ENCODE measurements at regions of chr7 and their contacts with region 1.

Region 1: GRCh38 chr7:16431646-16432424 is 10.5 kb upstream of the CRPPA start:
- DNase-seq: peak; percentile 62
- H3K4me3 Mint-ChIP-seq: no peak overlapping the region
- H3K27ac Mint-ChIP-seq: no peak overlapping the region
- H3K4me1 Mint-ChIP-seq: no peaks in the 10 kb centered on the region
- H3K27me3 Mint-ChIP-seq: no peaks in the 10 kb centered on the region
- CTCF ChIP-seq: peak; percentile 45

Region 2: DNA sequence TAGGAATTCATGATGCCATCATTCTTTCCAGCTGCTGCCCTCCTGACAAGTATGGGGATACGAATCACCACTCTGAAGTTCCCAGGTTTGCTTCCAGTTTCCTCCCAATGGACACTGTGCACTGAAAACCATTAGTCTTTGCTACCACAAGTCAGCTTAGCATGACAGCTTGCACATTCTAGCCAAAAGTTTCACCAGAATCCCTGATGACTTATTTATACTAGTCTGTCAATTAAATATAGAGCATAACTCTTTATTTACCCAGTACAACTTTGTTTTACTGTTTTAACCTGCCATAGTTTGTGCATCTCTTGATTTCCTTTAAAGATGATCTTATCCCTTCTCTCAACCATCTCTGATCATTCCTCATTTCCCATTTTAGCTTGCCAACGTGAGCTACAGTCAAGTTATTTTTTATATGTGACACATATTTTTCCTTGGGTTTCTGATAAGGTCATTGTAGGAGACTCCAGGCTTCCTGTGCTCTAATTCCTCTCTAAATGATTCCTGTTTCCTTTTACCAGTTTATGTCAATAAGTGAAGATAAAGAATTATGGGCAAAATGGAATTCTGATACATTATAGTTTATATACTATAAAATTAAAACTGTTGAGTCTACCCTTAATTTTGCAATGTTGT is 577.9 kb before region 1 on chr7:
- CTCF ChIA-PET with region 1: no interaction called
- POLR2A ChIA-PET with region 1: no interaction called
- intact Hi-C with region 1: no loop called
- DNase-seq: no peak
- H3K4me3 Mint-ChIP-seq: no peak overlapping the region
- H3K27ac Mint-ChIP-seq: no peak overlapping the region
- H3K4me1 Mint-ChIP-seq: no peaks in the 10 kb centered on the region
- H3K27me3 Mint-ChIP-seq: peaks cover 73% of the 10 kb centered on the region
- CTCF ChIP-seq: no peak

Region 3: GRCh38 chr7:16114633-16115032 is 317.2 kb before region 1 on chr7:
- CTCF ChIA-PET with region 1: interaction called, 4 read pairs
- POLR2A ChIA-PET with region 1: no interaction called
- intact Hi-C with region 1: loop called (anchors 2 kb)
- DNase-seq: peak; percentile 39
- H3K4me3 Mint-ChIP-seq: no peak overlapping the region
- H3K27ac Mint-ChIP-seq: no peak overlapping the region
- H3K4me1 Mint-ChIP-seq: no peaks in the 10 kb centered on the region
- H3K27me3 Mint-ChIP-seq: no peaks in the 10 kb centered on the region
- CTCF ChIP-seq: peak; percentile 37

Region 4: GRCh38 chr7:16369855-16370254 is 62.0 kb before region 1 on chr7:
- CTCF ChIA-PET with region 1: no interaction called
- POLR2A ChIA-PET with region 1: no interaction called
- intact Hi-C with region 1: no loop called
- DNase-seq: no peak
- H3K4me3 Mint-ChIP-seq: no peak overlapping the region
- H3K27ac Mint-ChIP-seq: no peak overlapping the region
- H3K4me1 Mint-ChIP-seq: no peaks in the 10 kb centered on the region
- H3K27me3 Mint-ChIP-seq: no peaks in the 10 kb centered on the region
- CTCF ChIP-seq: no peak

Region 5: GRCh38 chr7:16420649-16421332 is 11.0 kb before region 1 on chr7:
- CTCF ChIA-PET with region 1: interaction called, 10 read pairs
- POLR2A ChIA-PET with region 1: no interaction called
- intact Hi-C with region 1: no loop called
- DNase-seq: peak; percentile 86
- H3K4me3 Mint-ChIP-seq: peak overlapping the region; percentile 74
- H3K27ac Mint-ChIP-seq: peak overlapping the region; percentile 77
- H3K4me1 Mint-ChIP-seq: peaks cover 18% of the 10 kb centered on the region
- H3K27me3 Mint-ChIP-seq: no peaks in the 10 kb centered on the region
- CTCF ChIP-seq: peak; percentile 8

Region 6: GRCh38 chr7:16579216-16579615 is 147.4 kb after region 1 on chr7:
- CTCF ChIA-PET with region 1: no interaction called
- POLR2A ChIA-PET with region 1: no interaction called
- intact Hi-C with region 1: no loop called
- DNase-seq: no peak
- H3K4me3 Mint-ChIP-seq: no peak overlapping the region
- H3K27ac Mint-ChIP-seq: no peak overlapping the region
- H3K4me1 Mint-ChIP-seq: no peaks in the 10 kb centered on the region
- H3K27me3 Mint-ChIP-seq: no peaks in the 10 kb centered on the region
- CTCF ChIP-seq: no peak